Cardiac septum (tissue), 1 donor: ENCODE measurements at regions of chr18 and their contacts with region 1.

Region 1: GRCh38 chr18:79528846-79529245 is 133.1 kb downstream of the NFATC1 start:
- DNase-seq: peak; percentile 75

Region 2: GRCh38 chr18:79378542-79379250 is 150.2 kb before region 1 on chr18:
- intact Hi-C with region 1: loop called (anchors 2 kb)
- DNase-seq: peak; percentile 89

Region 3: GRCh38 chr18:79395761-79396387 is 133.0 kb before region 1 on chr18 and contains the start of gene NFATC1:
- intact Hi-C with region 1: loop called (anchors 5 kb)
- DNase-seq: peak; percentile 90
- total RNA-seq, gene NFATC1: 16.4 TPM

Region 4: DNA sequence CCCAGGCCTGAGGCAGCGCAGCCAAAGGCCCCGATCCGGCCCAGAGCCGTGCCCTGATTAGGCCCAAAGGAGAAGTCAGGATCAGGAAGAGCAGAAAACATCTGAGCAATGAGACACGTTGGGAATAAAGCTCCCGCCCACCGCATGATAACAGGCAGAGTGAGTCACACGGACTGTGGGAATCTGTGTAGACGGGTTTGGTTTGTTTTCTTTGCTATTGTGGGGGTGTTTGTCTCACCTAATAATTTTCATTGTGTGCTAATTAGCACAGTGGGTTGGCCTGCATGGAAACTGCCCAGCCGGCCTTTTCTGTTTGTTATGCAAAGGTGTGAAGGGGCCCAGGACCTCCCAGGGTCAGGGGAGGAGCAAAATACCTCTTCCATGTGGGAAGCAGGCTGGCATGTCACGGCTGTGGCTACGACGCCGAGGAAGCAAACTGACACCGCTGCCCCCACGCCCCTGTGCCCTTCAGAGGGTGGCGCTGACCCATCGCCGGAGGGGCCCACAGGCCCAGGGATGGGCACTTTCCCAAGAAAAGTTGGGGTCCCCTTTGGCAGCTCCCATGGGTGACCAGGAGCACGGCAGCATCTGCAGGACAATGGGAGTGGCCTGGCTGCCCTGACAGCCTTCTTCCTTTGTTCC is 82.3 kb after region 1 on chr18:
- intact Hi-C with region 1: no loop called
- DNase-seq: peak; percentile 78

Region 5: GRCh38 chr18:79644006-79644665 is 115.3 kb after region 1 on chr18:
- intact Hi-C with region 1: loop called (anchors 5 kb)
- DNase-seq: peak; percentile 84

Region 6: GRCh38 chr18:79738581-79739439 is 210.0 kb after region 1 on chr18:
- intact Hi-C with region 1: no loop called
- DNase-seq: no peak